AG04450 (cell line): ENCODE measurements at regions of chr12 and their contacts with region 1.

Region 1: GRCh38 chr12:43758728-43759563 is at the starts of genes IRAK4 and PUS7L:
- DNase-seq: peak; percentile 89
- H3K4me3 ChIP-seq: peak within 1 kb of the TSS; percentile 88
- H3K27ac ChIP-seq: peak within 1 kb of the TSS; percentile 83
- H3K27me3 ChIP-seq: no peaks in the 10 kb centered on the region
- CTCF ChIP-seq: peak; percentile 56
- polyA plus RNA-seq, gene IRAK4: 20.6 and 29.4 TPM in 2 replicates
- polyA plus RNA-seq, gene PUS7L: 9.1 and 15.2 TPM in 2 replicates

Region 2: DNA sequence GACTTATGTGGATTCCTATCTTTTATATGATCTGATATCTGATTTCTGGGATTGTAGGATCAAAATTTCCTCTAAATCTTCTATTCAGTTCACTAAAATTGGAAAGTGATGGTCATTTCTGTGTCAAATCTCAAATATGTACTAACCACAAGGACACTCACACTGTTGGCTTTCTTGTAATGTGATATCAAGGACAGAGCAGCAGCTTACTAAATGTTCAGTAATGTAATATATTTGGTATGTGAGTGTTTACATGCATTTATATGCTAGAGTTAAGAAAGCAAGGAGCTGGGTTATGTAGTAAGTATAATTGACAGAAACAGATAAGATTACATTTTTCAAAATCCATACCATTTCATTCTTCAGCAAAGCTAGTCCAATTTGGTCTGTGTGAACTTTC is 16.8 kb before region 1 on chr12:
- CTCF ChIA-PET with region 1: interaction called, 11 read pairs
- POLR2A ChIA-PET with region 1: interaction called, 7 read pairs
- DNase-seq: no peak
- H3K4me3 ChIP-seq: no peak overlapping the region
- H3K27ac ChIP-seq: no peak overlapping the region
- H3K27me3 ChIP-seq: no peaks in the 10 kb centered on the region
- CTCF ChIP-seq: no peak

Region 3: GRCh38 chr12:43812906-43813305 is 54.0 kb after region 1 on chr12:
- CTCF ChIA-PET with region 1: no interaction called
- POLR2A ChIA-PET with region 1: no interaction called
- DNase-seq: no peak
- H3K4me3 ChIP-seq: no peak overlapping the region
- H3K27ac ChIP-seq: no peak overlapping the region
- H3K27me3 ChIP-seq: no peaks in the 10 kb centered on the region
- CTCF ChIP-seq: no peak

Region 4: GRCh38 chr12:44088647-44089046 is 329.7 kb after region 1 on chr12:
- CTCF ChIA-PET with region 1: no interaction called
- POLR2A ChIA-PET with region 1: no interaction called
- DNase-seq: no peak
- H3K4me3 ChIP-seq: no peak overlapping the region
- H3K27ac ChIP-seq: no peak overlapping the region
- H3K27me3 ChIP-seq: no peaks in the 10 kb centered on the region
- CTCF ChIP-seq: no peak